CD8-positive, alpha-beta T cell (primary cell): ENCODE measurements at regions of chr20 and their contacts with region 1.

Region 1: DNA sequence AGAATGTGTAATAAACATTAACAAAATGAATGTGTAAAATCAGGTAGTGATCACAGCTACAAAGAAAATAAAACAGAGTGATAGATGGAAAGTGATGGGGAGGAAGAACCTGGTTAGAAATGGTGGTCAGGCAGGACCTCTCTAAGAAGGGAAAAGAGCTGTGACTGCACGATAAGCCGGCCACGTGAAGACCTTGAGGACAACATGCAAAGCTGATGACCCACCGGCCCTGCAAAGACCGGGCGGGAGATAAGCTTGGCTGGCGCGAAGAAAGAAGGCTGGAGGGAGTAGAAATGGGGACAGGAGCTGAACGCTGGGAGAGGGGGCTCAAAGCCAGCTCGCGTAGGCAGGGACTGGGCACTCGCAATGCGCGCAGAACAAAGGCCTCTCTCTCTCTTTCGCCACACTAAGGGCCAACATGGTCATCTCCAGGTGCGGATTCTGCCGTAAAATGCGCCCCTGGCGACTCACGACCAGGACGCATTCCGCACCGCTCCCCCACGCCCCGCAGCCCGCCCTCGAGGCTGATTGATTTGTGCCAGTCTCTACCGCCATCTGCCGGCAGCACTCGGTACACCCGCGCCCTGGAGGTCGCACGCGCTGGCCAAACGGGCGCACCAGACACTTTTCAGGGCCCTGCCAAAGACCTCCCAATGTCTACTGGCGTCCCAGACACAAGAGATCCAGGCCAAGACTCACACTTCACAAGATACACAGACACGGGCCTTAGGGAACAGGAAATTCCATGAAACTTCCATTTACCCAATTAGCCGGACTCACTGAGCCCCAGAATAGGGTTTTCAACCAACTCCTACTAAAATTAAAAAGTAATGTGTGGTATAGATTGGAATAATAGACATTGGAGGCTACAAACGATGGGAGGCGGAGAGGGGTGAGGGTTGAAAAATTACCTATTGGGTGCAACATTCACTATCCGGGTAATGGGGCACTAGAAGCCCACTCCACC is 9.4 kb downstream of the DEFB132 start:
- DNase-seq: peak; percentile 78 to 95 (median 89)
- ATAC-seq: peak; percentile 100
- H3K4me3 ChIP-seq: peak overlapping the region; percentile 51 to 69
- H3K4me3 Mint-ChIP-seq: peak overlapping the region; percentile 86
- H3K27ac ChIP-seq: no peak overlapping the region
- H3K27ac Mint-ChIP-seq: no peak overlapping the region
- H3K4me1 ChIP-seq: no peaks in the 10 kb centered on the region
- H3K4me1 Mint-ChIP-seq: peaks cover 9% of the 10 kb centered on the region
- H3K27me3 ChIP-seq: no peaks in the 10 kb centered on the region
- H3K27me3 Mint-ChIP-seq: peaks cover 2% of the 10 kb centered on the region
- CTCF ChIP-seq: peak; percentile 92

Region 2: DNA sequence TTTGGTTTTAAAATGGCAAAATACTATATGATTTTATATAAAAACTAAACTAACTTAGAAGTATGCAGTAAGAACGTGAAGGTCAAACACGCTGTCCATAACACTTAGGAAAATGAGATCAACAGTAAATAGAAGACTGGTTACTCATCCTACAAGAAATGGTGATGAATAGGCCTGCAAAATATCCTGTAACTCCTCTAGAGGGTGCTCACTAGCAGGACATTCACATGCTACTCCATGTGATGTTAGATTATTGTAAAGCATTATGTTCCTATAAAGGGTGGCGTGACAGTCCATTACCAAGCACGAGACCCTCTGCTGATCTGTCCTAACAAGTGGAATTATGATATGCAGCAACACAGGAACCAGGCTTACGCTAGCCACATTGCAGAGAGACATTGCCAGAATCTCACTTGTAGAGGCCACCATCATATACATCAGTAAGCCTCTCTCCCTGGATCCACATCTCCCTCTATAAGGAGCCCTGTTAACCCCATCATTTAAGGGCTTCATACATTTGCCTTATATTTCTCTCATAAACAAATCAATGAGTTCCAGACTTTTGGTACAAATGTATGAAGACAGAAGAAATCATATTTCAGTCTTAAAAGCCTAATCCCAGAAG is 57.8 kb before region 1 on chr20:
- CTCF ChIA-PET with region 1: interaction called, 24 read pairs
- POLR2A ChIA-PET with region 1: no interaction called
- intact Hi-C with region 1: loop called (anchors 1 kb)
- DNase-seq: peak in 3 of 9 experiments; percentile 7 to 68 (median 50)
- ATAC-seq: peak; percentile 80
- H3K4me3 ChIP-seq: no peak overlapping the region
- H3K4me3 Mint-ChIP-seq: no peak overlapping the region
- H3K27ac ChIP-seq: no peak overlapping the region
- H3K27ac Mint-ChIP-seq: no peak overlapping the region
- H3K4me1 ChIP-seq: no peaks in the 10 kb centered on the region
- H3K4me1 Mint-ChIP-seq: no peaks in the 10 kb centered on the region
- H3K27me3 ChIP-seq: no peaks in the 10 kb centered on the region
- H3K27me3 Mint-ChIP-seq: peaks cover 2% of the 10 kb centered on the region
- CTCF ChIP-seq: peak; percentile 55

Region 3: DNA sequence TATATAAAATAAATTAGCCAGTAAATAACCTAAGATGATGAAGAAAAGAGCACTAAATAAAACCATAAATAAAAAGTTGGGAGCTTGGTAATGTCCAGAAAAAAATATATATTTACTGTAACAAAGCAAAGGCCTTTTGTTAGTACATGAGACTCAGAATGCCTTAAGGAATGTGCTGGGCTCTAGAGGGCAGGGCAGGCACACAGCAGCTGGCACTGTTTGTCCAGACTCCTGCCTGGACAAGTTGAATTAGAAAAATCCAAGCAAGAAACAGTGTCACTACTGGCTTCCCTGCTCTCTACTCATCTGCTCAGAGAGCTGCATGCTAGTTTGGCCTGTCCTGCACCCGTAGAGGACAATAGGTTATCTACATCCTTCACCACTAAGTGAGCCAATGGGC is 31.0 kb before region 1 on chr20:
- CTCF ChIA-PET with region 1: interaction called, 15 read pairs
- POLR2A ChIA-PET with region 1: no interaction called
- intact Hi-C with region 1: no loop called
- DNase-seq: no peak
- ATAC-seq: no peak
- H3K4me3 ChIP-seq: no peak overlapping the region
- H3K4me3 Mint-ChIP-seq: no peak overlapping the region
- H3K27ac ChIP-seq: no peak overlapping the region
- H3K27ac Mint-ChIP-seq: no peak overlapping the region
- H3K4me1 ChIP-seq: peaks cover 12% of the 10 kb centered on the region
- H3K4me1 Mint-ChIP-seq: peaks cover 22% of the 10 kb centered on the region
- H3K27me3 ChIP-seq: peaks cover 0 to 2% of the 10 kb centered on the region in 2 experiments
- H3K27me3 Mint-ChIP-seq: no peaks in the 10 kb centered on the region
- CTCF ChIP-seq: no peak

Region 4: DNA sequence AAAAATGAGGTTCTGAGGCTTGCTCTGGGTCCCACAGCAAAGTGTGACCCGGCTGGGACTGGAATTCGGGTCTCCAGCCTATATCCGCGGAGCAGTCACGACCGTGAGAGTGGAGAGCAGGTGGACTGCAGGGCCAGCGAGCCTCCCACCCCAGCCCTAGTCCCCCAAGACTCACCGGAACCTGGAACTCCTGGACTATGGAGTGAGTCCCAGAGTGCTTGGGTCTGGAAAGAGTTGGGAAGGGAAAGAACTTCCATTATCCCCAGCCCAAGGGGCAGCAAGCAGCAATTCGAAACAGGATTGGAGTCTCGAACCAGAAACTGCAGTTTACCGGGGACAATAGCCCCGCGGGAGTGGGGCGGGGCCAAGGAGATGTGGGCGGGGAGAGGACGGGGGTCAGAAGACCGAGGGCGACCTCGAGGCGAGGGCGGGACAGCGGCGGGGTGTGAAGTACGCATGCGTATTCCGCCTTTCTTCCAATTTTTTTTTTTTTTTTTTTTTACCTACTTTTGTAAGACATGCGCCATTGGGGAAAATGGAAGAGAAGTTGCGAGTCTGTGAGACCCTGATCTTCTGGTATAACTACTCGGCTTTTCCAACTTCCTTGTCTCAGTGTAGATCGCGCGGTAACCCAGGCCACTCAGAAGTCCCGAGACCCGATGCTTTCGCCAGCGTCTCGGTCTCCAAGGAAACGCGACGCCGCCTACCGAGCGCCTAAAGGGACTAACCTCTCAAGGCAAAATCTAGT is 23.4 kb after region 1 on chr20 and contains the start of gene C20orf96:
- CTCF ChIA-PET with region 1: interaction called, 4 read pairs
- POLR2A ChIA-PET with region 1: no interaction called
- intact Hi-C with region 1: loop called in 1 of 2 experiments (anchors 1 kb)
- DNase-seq: peak; percentile 62 to 92 (median 84)
- ATAC-seq: peak; percentile 88
- H3K4me3 ChIP-seq: peak within 1 kb of the TSS; percentile 54 to 73
- H3K4me3 Mint-ChIP-seq: no peak within 1 kb of the TSS
- H3K27ac ChIP-seq: peak within 1 kb of the TSS; percentile 17 to 28
- H3K27ac Mint-ChIP-seq: no peak within 1 kb of the TSS
- H3K4me1 ChIP-seq: peaks cover 22% of the 10 kb centered on the region
- H3K4me1 Mint-ChIP-seq: peaks cover 6% of the 10 kb centered on the region
- H3K27me3 ChIP-seq: no peaks in the 10 kb centered on the region
- H3K27me3 Mint-ChIP-seq: no peaks in the 10 kb centered on the region
- CTCF ChIP-seq: peak; percentile 34
- total RNA-seq, gene C20orf96: 1.9 to 2.6 TPM

Region 5: GRCh38 chr20:297098-297924 is 30.4 kb after region 1 on chr20 and contains the start of gene ZCCHC3:
- CTCF ChIA-PET with region 1: interaction called, 7 read pairs
- POLR2A ChIA-PET with region 1: no interaction called
- intact Hi-C with region 1: loop called in 1 of 2 experiments (anchors 1 kb)
- DNase-seq: peak; percentile 58 to 93 (median 83)
- ATAC-seq: peak; percentile 85
- H3K4me3 ChIP-seq: peak within 1 kb of the TSS; percentile 86 to 98
- H3K4me3 Mint-ChIP-seq: peak within 1 kb of the TSS; percentile 99
- H3K27ac ChIP-seq: peak within 1 kb of the TSS; percentile 88 to 90
- H3K27ac Mint-ChIP-seq: peak within 1 kb of the TSS; percentile 98
- H3K4me1 ChIP-seq: peaks cover 28% of the 10 kb centered on the region
- H3K4me1 Mint-ChIP-seq: peaks cover 44% of the 10 kb centered on the region
- H3K27me3 ChIP-seq: no peaks in the 10 kb centered on the region
- H3K27me3 Mint-ChIP-seq: no peaks in the 10 kb centered on the region
- CTCF ChIP-seq: no peak
- total RNA-seq, gene ZCCHC3: 21.8 to 22.0 TPM

Region 6: GRCh38 chr20:309841-310644 is 43.2 kb after region 1 on chr20:
- CTCF ChIA-PET with region 1: no interaction called
- POLR2A ChIA-PET with region 1: no interaction called
- intact Hi-C with region 1: loop called in 1 of 2 experiments (anchors 1 kb)
- DNase-seq: peak in 8 of 9 experiments; percentile 64 to 88 (median 80)
- ATAC-seq: peak; percentile 100
- H3K4me3 ChIP-seq: peak overlapping the region; percentile 38 to 59
- H3K4me3 Mint-ChIP-seq: peak overlapping the region; percentile 81
- H3K27ac ChIP-seq: no peak overlapping the region
- H3K27ac Mint-ChIP-seq: no peak overlapping the region
- H3K4me1 ChIP-seq: peaks cover 13% of the 10 kb centered on the region
- H3K4me1 Mint-ChIP-seq: peaks cover 18% of the 10 kb centered on the region
- H3K27me3 ChIP-seq: no peaks in the 10 kb centered on the region
- H3K27me3 Mint-ChIP-seq: no peaks in the 10 kb centered on the region
- CTCF ChIP-seq: no peak

Region 7: DNA sequence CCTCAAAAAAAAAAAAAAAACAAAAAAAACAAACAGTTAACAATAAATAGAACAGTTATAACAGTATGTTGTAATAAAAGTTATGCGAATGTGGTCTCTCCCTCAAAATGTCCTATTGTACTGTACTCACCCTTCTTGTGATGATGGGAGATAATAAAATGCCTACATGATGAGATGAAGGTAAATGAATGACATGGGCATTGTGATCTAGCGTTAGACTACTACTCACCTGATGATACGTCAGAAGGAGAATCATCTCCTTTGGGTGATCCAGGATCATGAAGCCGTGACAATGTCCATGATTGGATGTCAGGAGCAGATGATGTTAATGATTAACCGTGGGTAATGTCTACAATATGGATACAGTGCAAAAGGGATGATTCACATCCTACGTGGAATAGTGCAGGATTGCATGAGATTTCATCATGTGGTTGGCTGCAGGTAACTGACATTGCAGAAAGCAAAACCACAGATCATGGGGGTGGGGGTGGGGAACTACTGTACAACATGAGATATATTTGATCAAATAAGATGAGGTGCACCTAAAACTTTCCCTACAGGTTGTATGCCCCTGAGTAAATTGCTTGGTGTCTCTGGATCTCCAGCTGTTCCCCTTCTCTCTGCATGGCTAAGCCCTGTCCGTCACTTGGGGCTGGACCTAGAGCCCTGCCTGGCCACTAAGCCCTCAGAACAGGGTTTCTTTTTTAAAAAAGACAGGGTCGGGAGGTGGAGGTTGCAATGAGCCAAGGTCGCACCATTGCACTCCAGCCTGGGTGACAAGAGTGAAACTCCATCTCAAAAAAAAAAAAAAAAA is 135.0 kb after region 1 on chr20:
- CTCF ChIA-PET with region 1: no interaction called
- POLR2A ChIA-PET with region 1: no interaction called
- intact Hi-C with region 1: no loop called
- DNase-seq: no peak
- ATAC-seq: no peak
- H3K4me3 ChIP-seq: no peak overlapping the region
- H3K4me3 Mint-ChIP-seq: no peak overlapping the region
- H3K27ac ChIP-seq: no peak overlapping the region
- H3K27ac Mint-ChIP-seq: no peak overlapping the region
- H3K4me1 ChIP-seq: peaks cover 12% of the 10 kb centered on the region
- H3K4me1 Mint-ChIP-seq: peaks cover 19% of the 10 kb centered on the region
- H3K27me3 ChIP-seq: no peaks in the 10 kb centered on the region
- H3K27me3 Mint-ChIP-seq: no peaks in the 10 kb centered on the region
- CTCF ChIP-seq: no peak